SK-N-SH (cell line): ENCODE measurements at regions of chr1 and their contacts with region 1.

Region 1: DNA sequence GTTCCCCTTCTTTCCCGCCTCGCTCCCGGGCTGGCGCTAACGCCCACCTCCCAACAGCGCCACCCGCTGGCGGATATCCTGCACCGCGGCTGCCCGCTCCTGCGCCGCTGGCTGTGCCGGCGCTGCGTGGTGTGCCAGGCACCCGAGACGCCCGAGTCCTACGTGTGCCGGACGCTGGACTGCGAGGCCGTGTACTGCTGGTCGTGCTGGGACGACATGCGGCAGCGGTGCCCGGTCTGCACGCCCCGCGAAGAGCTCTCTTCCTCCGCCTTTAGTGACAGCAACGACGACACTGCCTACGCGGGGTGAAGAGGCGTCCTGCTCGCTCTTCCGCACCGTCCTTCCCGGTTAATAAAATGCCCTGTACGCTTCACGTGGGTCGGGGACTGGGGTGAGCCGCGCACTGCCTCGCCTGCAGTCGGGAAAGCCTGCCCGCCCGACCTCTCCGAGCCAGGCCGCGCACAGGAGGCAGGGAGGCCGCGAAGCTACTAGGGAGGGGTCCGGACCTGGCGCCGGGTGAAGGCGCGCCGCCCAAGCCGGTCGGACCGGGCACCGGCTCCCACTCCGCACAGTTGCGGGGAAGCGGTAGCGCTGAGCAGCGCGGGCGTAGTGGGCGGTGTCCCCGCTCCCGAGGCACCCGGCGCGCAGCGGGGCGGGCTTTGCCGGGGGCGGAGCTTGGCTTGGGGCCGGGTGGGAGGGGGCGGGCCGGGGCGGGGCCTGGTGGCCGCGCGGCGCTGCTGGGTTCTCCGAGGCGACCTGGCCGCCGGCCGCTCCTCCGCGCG is at the start of gene ADAM15:
- DNase-seq: peak; percentile 99
- H3K4me3 ChIP-seq: peak within 1 kb of the TSS; percentile 84 to 98
- H3K27ac ChIP-seq: peak within 1 kb of the TSS; percentile 61 to 92
- H3K4me1 ChIP-seq: peaks cover 7 to 42% of the 10 kb centered on the region in 2 experiments
- H3K27me3 ChIP-seq: no peaks in the 10 kb centered on the region
- CTCF ChIP-seq: peak; percentile 88
- EP300 ChIP-seq: no peak
- RAD21 ChIP-seq: peak; percentile 40
- polyA plus RNA-seq, gene ADAM15: 60.1 and 64.1 TPM in 2 replicates

Region 2: DNA sequence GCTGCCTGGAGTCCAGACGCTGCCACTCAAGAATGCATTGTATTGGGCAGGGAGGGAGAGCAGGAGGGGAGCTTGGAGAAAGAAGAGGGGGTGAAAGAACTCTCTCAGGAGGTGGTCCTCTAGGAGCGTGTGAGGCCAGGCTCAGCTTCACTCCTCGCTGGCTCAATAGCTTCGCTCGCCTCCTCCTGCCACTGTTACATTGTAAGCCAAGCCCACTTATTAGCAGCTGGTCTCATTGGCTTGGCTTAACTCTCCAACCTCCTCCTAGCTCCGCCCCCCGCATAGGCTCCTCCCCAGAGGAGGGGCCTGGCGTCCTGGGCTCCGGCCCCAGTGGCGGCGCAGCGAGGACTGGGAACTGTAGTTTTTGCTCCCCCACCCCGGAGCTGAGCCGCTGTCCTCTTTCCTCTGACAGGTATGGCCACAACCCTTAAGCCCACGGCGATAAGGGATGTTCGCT is 180.6 kb before region 1 on chr1 and contains the start of gene KCNN3:
- CTCF ChIA-PET with region 1: no interaction called
- POLR2A ChIA-PET with region 1: no interaction called
- DNase-seq: peak; percentile 96
- H3K4me3 ChIP-seq: peak within 1 kb of the TSS; percentile 37 to 59
- H3K27ac ChIP-seq: no peak within 1 kb of the TSS; a peak in 1 of 4 replicates
- H3K4me1 ChIP-seq: peaks cover 14 to 40% of the 10 kb centered on the region in 2 experiments
- H3K27me3 ChIP-seq: peaks cover 8% of the 10 kb centered on the region; the same call in 1 of the 2 replicates
- CTCF ChIP-seq: no peak
- EP300 ChIP-seq: no peak
- RAD21 ChIP-seq: no peak; the same call in 1 of the 2 replicates
- polyA plus RNA-seq, gene KCNN3: 0.10 and 0.16 TPM in 2 replicates

Region 3: DNA sequence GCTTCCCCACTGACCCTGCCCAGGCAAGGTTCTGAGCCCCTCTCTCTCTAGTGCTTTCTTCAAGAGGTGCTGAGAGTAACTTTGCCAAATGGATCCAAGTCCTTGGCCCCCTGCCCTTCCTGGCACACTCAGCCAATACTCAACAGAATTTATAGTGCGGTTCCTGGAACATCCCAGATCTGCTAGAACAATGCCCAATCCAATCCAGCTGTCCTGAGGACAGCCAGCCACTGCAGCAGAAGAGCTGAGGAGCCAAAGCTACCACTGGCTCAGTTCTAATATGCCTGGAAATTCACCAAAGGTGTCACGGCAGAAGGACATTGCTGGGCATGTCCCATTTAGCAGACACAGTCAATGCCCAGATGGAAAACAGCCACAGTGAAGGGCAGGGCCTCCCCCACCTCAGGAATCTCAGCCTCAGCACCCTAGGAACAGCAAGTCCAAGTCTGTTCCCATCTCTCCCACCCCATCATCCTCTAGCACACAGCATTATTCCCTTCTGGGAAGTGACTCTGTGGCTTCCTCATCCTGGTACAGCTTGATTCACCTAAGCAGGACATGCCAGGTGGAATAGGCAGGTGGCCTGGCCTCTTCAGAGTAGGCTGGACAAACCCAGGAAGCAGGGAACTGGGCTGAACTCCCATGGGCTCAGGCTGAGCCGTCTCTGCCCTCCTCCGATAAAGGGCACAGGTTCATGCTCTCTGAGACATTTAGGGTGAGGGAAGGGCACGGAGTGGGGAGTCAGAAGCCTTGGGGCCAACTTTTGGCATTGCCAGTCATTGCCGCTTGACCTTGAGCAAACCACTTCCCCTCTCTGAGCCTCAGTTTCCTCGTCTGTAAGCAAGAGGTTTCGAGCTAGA is 138.8 kb before region 1 on chr1:
- CTCF ChIA-PET with region 1: no interaction called
- POLR2A ChIA-PET with region 1: no interaction called
- DNase-seq: no peak
- H3K4me3 ChIP-seq: no peak overlapping the region
- H3K27ac ChIP-seq: no peak overlapping the region
- H3K4me1 ChIP-seq: no peaks in the 10 kb centered on the region
- H3K27me3 ChIP-seq: no peaks in the 10 kb centered on the region
- CTCF ChIP-seq: no peak
- EP300 ChIP-seq: no peak
- RAD21 ChIP-seq: no peak

Region 4: DNA sequence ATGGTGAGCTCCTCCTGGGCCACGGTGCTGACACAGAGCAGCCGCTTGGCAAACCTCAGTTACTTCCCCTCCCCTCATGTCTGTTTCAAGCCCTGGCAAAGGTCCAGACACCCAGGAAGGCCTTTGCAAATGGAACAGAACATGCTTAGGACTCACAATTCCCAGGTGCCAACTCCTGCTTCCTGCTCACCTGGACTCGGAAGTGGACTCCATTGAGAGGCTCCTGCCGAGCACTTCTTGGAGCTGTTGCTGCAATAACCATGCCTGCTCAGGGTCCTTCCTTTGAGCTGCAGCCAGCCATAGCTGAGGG is 27.9 kb before region 1 on chr1:
- CTCF ChIA-PET with region 1: interaction called, 71 read pairs
- POLR2A ChIA-PET with region 1: no interaction called
- DNase-seq: peak; percentile 57
- H3K4me3 ChIP-seq: no peak overlapping the region
- H3K27ac ChIP-seq: no peak overlapping the region
- H3K4me1 ChIP-seq: peaks cover 0 to 4% of the 10 kb centered on the region in 2 experiments; a peak in 1 of 4 replicates
- H3K27me3 ChIP-seq: no peaks in the 10 kb centered on the region
- CTCF ChIP-seq: no peak
- EP300 ChIP-seq: no peak
- RAD21 ChIP-seq: no peak